Activated CD8-positive, alpha-beta T cell treated with anti-CD3 and anti-CD28 coated beads for 36 hours (primary cell): ENCODE measurements at regions of chr15 and their contacts with region 1.

Region 1: DNA sequence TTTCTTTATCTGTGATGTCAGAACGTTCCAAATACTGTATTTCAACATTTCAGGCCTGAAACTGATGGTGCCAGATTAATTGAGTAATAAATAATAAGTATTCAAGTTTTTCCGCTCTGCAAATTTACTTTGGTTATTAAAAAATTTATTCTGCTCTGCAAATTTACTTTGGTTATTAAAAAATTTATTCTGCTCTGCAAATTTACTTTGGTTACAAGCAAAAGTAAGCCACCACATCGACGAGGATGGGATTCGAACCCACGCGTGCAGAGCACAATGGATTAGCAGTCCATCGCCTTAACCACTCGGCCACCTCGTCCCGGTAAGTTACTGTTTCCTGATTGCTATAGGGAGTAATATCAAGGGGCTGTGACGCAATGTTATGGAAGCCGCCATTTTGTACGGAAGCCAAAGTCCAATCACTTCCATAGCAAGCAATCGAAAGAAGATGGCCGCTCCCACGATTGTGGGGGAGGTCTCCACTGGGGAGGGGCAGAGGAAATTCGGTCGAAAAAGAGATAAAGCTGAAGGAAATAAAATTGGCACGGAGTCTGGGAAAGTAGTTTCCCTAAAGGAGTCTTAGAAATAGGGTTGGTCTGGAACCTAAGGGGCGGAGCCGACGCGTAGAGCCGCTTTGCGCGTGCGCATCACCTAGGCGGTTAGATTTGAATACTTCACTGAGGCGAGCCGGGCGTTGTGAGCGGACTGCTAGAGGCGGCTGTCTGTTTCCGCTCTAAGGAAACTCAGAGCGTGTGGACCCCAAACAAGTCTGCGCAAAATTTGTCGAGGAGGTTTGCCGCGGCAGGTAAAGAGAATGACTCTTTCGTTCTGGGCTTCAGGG is at the start of gene KNL1:
- DNase-seq: peak; percentile 95
- ATAC-seq: peak; percentile 87
- H3K4me3 Mint-ChIP-seq: peak within 1 kb of the TSS; percentile 83
- H3K27ac Mint-ChIP-seq: peak within 1 kb of the TSS; percentile 99
- H3K4me1 Mint-ChIP-seq: peaks cover 26% of the 10 kb centered on the region
- H3K27me3 Mint-ChIP-seq: peaks cover 5% of the 10 kb centered on the region
- CTCF ChIP-seq: no peak
- total RNA-seq, gene KNL1: 20.9 to 22.8 TPM

Region 2: DNA sequence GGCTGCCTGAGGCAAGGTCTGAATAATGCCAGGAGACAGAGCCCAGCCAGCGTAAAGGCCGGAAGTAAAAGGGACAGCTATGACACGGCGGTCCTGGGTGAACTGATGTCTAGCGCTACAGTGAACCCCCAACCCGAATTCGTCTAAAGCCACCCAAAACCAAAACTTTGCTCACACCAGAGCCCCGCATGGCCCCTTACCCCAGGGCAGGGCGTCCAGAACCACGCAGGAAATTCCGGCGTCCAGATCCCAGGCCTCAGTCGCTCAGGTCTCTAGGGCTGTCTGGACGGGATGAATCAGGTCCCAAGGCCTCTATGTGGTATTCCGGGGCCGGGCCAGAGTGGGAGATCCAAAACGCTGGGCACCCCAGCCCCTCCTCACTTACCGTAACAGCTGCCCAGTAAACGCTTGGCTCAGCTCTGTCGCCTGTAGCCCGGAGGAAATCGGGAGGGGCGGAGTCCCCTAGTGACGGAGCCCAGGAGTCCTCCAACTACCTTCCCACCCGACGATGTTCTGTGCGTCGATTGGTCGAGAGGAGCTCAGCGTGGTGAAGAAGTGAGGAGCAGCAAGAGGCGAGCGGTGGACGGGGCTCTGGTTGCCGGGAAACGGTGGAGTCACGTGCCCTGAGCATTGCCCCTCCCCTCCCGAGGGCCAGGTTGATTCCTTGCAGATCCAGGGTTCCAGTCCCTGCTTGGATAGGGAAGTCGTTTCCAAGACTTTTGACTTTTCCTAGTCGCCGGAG is 29.0 kb before region 1 on chr15 and contains the start of gene CCDC32:
- CTCF ChIA-PET with region 1: interaction called, 21 read pairs
- POLR2A ChIA-PET with region 1: interaction called, 8 read pairs
- intact Hi-C with region 1: no loop called
- DNase-seq: peak; percentile 98
- ATAC-seq: peak; percentile 96
- H3K4me3 Mint-ChIP-seq: peak within 1 kb of the TSS; percentile 95
- H3K27ac Mint-ChIP-seq: peak within 1 kb of the TSS; percentile 94
- H3K4me1 Mint-ChIP-seq: peaks cover 41% of the 10 kb centered on the region
- H3K27me3 Mint-ChIP-seq: no peaks in the 10 kb centered on the region
- CTCF ChIP-seq: no peak
- total RNA-seq, gene CCDC32: 21.3 to 22.0 TPM

Region 3: DNA sequence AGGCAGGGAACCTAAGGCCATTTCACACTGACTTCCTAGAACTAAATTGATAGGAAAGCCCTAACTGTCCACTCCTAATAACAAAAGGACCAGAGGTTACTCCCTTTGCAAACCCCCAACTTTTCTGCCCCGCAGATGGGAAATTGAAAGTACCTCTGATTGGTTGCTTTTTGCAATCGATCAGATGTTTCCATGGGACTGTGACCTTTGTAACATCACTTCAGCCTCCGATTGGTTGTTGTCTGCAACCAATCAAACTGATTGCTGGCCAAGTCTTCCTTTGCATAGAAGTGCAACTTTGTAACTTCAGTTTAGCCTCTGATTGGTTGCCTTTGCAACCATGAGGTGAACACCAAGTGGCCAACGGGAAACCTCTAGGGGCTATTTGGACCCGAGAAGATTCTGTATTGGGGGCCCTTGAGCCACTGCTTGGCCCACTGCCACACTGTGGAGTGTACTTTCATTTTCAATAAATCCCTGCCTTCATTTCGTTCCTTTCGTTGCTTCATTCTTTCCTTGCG is 11.0 kb before region 1 on chr15:
- CTCF ChIA-PET with region 1: interaction called, 17 read pairs
- POLR2A ChIA-PET with region 1: no interaction called
- intact Hi-C with region 1: no loop called
- DNase-seq: no peak
- ATAC-seq: peak; percentile 42
- H3K4me3 Mint-ChIP-seq: no peak overlapping the region
- H3K27ac Mint-ChIP-seq: no peak overlapping the region
- H3K4me1 Mint-ChIP-seq: no peaks in the 10 kb centered on the region
- H3K27me3 Mint-ChIP-seq: no peaks in the 10 kb centered on the region
- CTCF ChIP-seq: no peak